GM12878 (cell line): ENCODE measurements at regions of chr20 and their contacts with region 1.

Region 1: DNA sequence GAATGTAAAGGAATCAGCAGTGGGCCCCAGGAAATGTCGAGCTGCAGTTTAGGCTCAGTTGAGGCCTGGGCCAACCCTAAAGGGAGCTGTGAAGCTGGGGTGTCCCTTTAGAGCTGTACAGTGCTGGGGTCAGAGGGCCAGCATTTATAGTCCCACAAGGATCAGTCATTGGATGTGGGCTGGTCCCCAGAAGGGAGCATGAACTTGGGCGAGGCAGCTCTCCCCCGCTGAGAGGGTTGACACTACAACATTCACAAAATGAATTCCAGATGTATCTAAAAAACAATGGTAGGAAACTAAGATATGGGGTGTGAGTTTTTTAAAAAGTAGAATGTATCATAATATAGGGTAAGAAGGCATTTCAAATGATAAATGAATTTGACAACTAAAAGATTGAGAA is 29.7 kb upstream of the TMX4 start:
- DNase-seq: no peak
- ATAC-seq: no peak
- H3K4me3 ChIP-seq: no peak overlapping the region
- H3K27ac ChIP-seq: no peak overlapping the region
- H3K4me1 ChIP-seq: no peaks in the 10 kb centered on the region
- H3K27me3 ChIP-seq: no peaks in the 10 kb centered on the region
- CTCF ChIP-seq: no peak
- EP300 ChIP-seq: no peak
- POLR2A ChIP-seq: no peak
- RAD21 ChIP-seq: no peak

Region 2: DNA sequence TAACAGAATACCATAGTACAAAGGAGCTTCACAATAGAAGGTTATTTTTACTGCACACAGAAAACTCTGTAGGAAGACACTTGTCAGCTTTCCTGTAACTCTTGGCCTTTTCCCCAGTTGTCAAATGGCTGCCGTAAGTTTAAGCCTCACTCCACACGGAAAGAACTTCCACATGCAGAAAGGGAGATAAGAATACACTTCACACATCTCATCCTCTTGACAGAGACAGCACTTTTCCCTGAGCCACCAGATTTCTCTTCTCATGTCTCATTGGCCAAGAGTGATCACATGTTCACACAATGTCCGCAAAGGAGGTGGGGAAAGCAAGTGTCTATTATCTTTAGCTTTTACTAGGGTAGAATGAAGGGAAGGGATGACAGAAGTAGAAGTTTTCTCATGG is 649.7 kb before region 1 on chr20:
- CTCF ChIA-PET with region 1: no interaction called
- POLR2A ChIA-PET with region 1: no interaction called
- RAD21 ChIA-PET with region 1: no interaction called
- SMC1A ChIA-PET with region 1: no interaction called
- in situ Hi-C with region 1: no loop called
- intact Hi-C with region 1: no loop called
- DNase-seq: no peak
- ATAC-seq: no peak
- H3K4me3 ChIP-seq: no peak overlapping the region
- H3K27ac ChIP-seq: no peak overlapping the region
- H3K4me1 ChIP-seq: no peaks in the 10 kb centered on the region
- H3K27me3 ChIP-seq: no peaks in the 10 kb centered on the region
- CTCF ChIP-seq: no peak
- EP300 ChIP-seq: no peak
- POLR2A ChIP-seq: no peak
- RAD21 ChIP-seq: no peak

Region 3: DNA sequence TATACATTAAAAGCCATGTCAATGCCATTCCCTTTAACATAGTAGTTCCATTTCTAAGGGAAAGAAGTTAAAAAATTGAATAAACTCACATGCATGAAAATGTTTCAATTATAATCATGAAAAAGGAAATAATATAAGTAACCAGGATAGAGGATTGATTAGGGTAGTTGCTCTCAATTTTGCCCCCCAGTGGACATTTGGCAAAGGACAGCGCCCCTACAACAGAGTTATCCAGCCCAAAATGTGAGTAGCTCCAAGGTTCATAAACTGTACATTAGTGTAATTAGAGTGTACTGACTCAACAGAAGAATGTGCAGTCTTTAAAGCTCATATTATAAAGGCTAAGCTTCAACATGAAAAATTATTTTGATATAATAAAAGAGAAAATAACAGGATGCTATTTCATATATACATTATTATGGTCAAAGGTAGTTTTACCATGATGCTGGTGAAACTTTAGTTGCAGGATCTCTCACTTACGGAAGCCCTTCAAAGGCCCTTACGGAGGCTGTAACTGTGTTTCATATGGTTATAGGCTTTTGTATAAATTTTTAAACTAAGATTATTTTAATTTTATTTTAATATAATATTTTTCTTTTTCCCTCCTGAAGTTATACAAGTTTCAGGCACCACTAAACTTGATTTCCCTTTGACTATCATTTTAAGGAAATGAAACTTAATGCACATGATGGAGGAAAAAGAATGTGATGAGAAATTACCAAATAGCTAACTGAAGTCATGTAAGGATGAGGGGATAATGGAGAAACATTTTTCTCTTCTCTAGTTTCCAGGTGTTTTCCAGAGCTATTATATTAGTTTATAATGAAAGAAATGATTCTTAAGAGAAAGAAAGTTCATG is 486.3 kb after region 1 on chr20:
- CTCF ChIA-PET with region 1: interaction called, 4 read pairs
- POLR2A ChIA-PET with region 1: no interaction called
- RAD21 ChIA-PET with region 1: no interaction called
- SMC1A ChIA-PET with region 1: no interaction called
- in situ Hi-C with region 1: no loop called
- intact Hi-C with region 1: loop called (anchors 5 kb)
- DNase-seq: no peak
- ATAC-seq: peak; percentile 75
- H3K4me3 ChIP-seq: no peak overlapping the region
- H3K27ac ChIP-seq: no peak overlapping the region
- H3K4me1 ChIP-seq: no peaks in the 10 kb centered on the region
- H3K27me3 ChIP-seq: no peaks in the 10 kb centered on the region; a peak in 1 of 4 replicates
- CTCF ChIP-seq: peak; percentile 41 to 53 (median 44); a peak in 5 of 6 replicates
- EP300 ChIP-seq: no peak
- POLR2A ChIP-seq: no peak
- RAD21 ChIP-seq: peak; percentile 30; the same call in 1 of the 2 replicates